Head of caudate nucleus (tissue), 42 donors: ENCODE measurements at regions of chr5 and their contacts with region 1.

Region 1: GRCh38 chr5:72816311-72817145 is at the start of gene TNPO1:
- DNase-seq: peak; percentile 79 to 96 (median 93)

Region 2: DNA sequence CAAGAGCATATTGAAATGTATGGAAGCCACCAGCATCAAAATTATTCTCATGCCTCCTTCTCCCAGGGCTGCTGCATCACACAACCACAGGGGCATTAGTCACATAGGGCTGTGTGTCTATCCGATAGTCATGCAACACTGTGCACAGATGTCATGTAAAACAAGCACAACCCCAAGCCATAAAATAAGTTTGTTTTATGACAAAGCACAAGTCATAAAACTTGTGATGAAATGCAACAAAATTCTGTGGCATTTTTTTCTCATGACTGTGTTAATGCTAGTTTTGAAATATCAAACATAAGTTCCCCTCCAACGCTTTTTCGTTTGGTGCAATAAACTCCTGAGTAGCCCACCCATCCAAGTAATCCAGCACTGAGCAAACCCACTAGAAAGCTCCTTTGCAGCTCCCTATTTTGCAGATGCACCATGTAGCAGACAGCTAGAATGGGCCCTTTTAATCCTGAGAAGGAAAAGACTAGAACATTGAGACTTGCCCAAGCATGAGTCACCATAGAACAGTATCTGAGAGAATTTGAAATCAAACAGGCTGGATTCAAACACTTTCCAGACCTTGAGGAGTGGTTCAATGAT is 216.0 kb before region 1 on chr5:
- intact Hi-C with region 1: loop called (anchors 5 kb)
- DNase-seq: no peak

Region 3: DNA sequence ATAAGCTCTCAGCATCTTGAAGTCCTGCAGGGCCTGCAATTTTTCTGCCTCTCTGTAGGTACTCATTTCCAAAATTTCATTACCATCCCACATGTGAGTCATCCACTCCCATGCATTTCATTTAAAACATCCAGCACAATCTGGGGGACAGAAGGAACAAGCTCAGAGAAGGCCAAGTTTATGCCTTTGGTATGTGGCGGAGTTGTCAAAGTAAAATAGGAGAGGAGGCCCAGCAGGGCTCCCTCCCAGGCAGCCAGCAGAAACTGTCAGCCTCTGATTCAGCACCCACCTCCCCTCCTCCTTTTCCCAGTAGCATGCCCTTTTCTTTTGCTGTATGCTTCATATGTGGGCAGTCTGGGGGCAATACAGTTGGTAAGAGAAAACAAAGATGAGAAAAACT is 182.9 kb before region 1 on chr5:
- intact Hi-C with region 1: loop called (anchors 5 kb)
- DNase-seq: peak in 30 of 42 donors; percentile 8 to 77 (median 34)

Region 4: GRCh38 chr5:72847989-72848473 is 31.5 kb after region 1 on chr5:
- intact Hi-C with region 1: loop called (anchors 2 kb)
- DNase-seq: peak; percentile 92 to 98 (median 96)